ENCODE measurements at regions of chr15 and their contacts with region 1.

Region 1: DNA sequence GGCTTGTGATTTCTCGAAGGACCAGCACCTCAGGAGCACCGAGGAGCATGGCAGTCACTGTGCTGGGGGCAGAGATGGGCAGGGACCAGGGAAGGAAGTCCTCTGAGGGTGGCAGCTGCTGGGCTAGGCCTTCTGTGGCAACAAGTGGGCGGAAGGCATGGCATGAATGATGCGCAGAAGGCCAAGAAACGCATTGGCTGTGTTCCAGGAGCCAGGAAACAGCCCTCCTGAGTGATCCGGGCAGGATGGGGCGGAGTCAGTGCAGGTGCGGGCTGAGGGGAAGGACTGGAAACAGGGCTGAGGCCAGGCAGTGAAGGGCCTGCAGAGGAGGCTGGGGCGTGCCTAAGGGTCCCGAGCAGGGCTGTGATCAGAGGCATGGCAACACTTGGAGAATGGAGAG is 23.6 kb downstream of the MRPS11 start:
- DNase-seq: no peak
- ATAC-seq: no peak
- H3K4me3 ChIP-seq: no peak overlapping the region
- H3K27ac ChIP-seq: no peak overlapping the region
- H3K4me1 ChIP-seq: no peaks in the 10 kb centered on the region
- H3K27me3 ChIP-seq: no peaks in the 10 kb centered on the region
- CTCF ChIP-seq: no peak

Region 2: DNA sequence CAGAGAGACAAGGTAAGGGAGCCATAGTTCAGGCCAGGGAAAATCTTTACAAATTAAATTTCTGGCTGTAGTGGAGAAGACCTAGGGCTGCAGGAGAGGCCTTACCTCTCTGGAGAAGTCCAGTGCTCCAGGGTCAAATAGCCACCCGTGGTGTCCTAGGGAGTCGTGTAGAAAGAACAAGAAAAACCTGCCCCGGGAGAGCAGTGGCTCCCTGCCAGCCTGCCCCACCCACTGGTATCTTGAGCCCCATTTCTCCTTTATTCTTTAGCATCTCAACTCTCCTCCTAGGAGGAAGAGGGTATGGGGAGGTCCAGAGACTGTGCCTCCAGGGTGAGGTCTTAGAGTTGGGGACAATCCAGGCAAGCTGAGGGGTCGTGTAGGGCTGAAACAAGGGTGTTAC is 202.5 kb before region 1 on chr15:
- CTCF ChIA-PET with region 1: no interaction called
- POLR2A ChIA-PET with region 1: no interaction called
- in situ Hi-C with region 1: no loop called
- intact Hi-C with region 1: no loop called
- DNase-seq: no peak
- ATAC-seq: no peak
- H3K4me3 ChIP-seq: no peak overlapping the region
- H3K27ac ChIP-seq: no peak overlapping the region
- H3K4me1 ChIP-seq: no peaks in the 10 kb centered on the region
- H3K27me3 ChIP-seq: peaks cover 11% of the 10 kb centered on the region
- CTCF ChIP-seq: no peak

Region 3: GRCh38 chr15:88605189-88606069 is 114.3 kb after region 1 on chr15:
- CTCF ChIA-PET with region 1: interaction called, 10 read pairs
- POLR2A ChIA-PET with region 1: no interaction called
- in situ Hi-C with region 1: no loop called
- intact Hi-C with region 1: loop called (anchors 5 kb)
- DNase-seq: no peak
- ATAC-seq: peak; percentile 57
- H3K4me3 ChIP-seq: peak overlapping the region; percentile 15 to 22; a peak in 3 of 4 replicates
- H3K27ac ChIP-seq: no peak overlapping the region
- H3K4me1 ChIP-seq: peaks cover 15% of the 10 kb centered on the region
- H3K27me3 ChIP-seq: peaks cover 54% of the 10 kb centered on the region
- CTCF ChIP-seq: no peak

Region 4: GRCh38 chr15:88681610-88682221 is 190.6 kb after region 1 on chr15:
- CTCF ChIA-PET with region 1: no interaction called
- POLR2A ChIA-PET with region 1: no interaction called
- in situ Hi-C with region 1: no loop called
- intact Hi-C with region 1: no loop called
- DNase-seq: no peak
- ATAC-seq: peak; percentile 43; the same call in 1 of the 2 replicates
- H3K4me3 ChIP-seq: no peak overlapping the region
- H3K27ac ChIP-seq: no peak overlapping the region
- H3K4me1 ChIP-seq: no peaks in the 10 kb centered on the region
- H3K27me3 ChIP-seq: no peaks in the 10 kb centered on the region
- CTCF ChIP-seq: no peak